HCT116 (cell line): ENCODE measurements at regions of chr6 and their contacts with region 1.

Region 1: GRCh38 chr6:96897383-96898240 is at the start of gene NDUFAF4:
- DNase-seq: peak; percentile 90
- ATAC-seq: peak; percentile 92
- H3K4me3 ChIP-seq: peak within 1 kb of the TSS; percentile 84 to 91
- H3K27ac ChIP-seq: peak within 1 kb of the TSS; percentile 82
- H3K4me1 ChIP-seq: peaks cover 6 to 22% of the 10 kb centered on the region in 2 experiments
- H3K27me3 ChIP-seq: no peaks in the 10 kb centered on the region
- CTCF ChIP-seq: peak; percentile 64 to 85 (median 81); a peak in 5 of 6 replicates
- POLR2A ChIP-seq: peak; percentile 72
- RAD21 ChIP-seq: peak; percentile 62
- total RNA-seq, gene NDUFAF4: 62.4 TPM

Region 2: DNA sequence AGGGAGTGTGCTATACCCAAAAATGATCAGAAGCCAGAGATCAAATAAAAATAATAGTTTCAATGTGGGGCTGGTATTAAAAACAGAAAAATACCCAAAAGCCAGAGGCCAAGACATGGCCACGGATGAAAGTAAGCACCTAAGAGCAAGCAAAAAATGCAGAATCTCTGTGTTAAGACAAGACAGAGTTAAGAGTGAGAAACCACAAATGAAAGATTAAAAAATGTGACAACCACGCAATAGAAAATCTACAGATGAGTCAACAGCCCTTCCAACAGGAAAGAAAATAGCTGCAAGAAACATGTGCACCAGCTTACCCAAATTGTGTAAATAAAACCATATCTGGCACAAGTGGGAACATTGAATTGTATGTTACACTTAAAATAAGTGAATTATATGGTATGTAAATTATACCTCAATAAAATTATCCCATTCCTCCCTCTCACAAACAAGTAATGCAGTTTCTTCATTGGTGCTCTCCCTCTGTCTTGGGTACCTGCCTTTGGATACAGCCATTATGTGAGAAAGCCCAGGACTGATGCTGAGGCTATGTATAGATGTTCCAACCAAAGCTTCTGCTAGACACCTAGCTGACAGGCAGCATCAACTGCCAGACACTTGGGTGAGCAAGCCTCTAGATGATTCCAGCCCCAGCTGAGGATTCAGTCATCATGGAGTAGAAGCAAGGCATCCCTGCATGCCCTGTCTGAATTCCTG is 431.3 kb before region 1 on chr6:
- CTCF ChIA-PET with region 1: no interaction called
- POLR2A ChIA-PET with region 1: no interaction called
- RAD21 ChIA-PET with region 1: no interaction called
- intact Hi-C with region 1: no loop called
- DNase-seq: no peak
- ATAC-seq: no peak
- H3K4me3 ChIP-seq: no peak overlapping the region
- H3K27ac ChIP-seq: no peak overlapping the region
- H3K4me1 ChIP-seq: no peaks in the 10 kb centered on the region
- H3K27me3 ChIP-seq: no peaks in the 10 kb centered on the region
- CTCF ChIP-seq: no peak
- POLR2A ChIP-seq: no peak
- RAD21 ChIP-seq: no peak

Region 3: DNA sequence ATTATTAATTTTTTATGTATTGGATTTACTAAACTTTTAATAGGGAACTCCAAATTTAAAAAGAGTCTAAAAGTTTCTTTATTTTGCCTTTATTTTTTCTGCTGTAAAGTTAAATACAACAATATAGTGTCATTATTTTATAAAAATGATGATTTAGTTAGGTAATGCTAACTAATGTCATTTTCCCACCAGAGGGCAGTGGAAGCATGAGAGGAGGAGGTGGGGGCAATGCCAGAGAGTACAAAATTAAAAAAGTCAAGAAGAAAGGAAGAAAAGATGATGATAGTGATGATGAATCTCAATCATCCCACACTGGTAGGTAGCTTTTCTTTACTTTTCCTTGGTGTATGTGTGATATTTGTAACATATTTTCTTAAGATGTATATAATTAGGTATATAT is 354.9 kb before region 1 on chr6:
- CTCF ChIA-PET with region 1: no interaction called
- POLR2A ChIA-PET with region 1: no interaction called
- RAD21 ChIA-PET with region 1: no interaction called
- intact Hi-C with region 1: loop called (anchors 1 kb)
- DNase-seq: no peak
- ATAC-seq: peak; percentile 58
- H3K4me3 ChIP-seq: no peak overlapping the region
- H3K27ac ChIP-seq: no peak overlapping the region
- H3K4me1 ChIP-seq: no peaks in the 10 kb centered on the region
- H3K27me3 ChIP-seq: no peaks in the 10 kb centered on the region
- CTCF ChIP-seq: peak; percentile 26 to 60 (median 46); a peak in 4 of 6 replicates
- POLR2A ChIP-seq: no peak
- RAD21 ChIP-seq: peak; percentile 49; the same call in 1 of the 2 replicates

Region 4: GRCh38 chr6:96837081-96837971 is 60.3 kb before region 1 on chr6 and contains the start of gene GPR63:
- CTCF ChIA-PET with region 1: no interaction called
- POLR2A ChIA-PET with region 1: no interaction called
- RAD21 ChIA-PET with region 1: no interaction called
- intact Hi-C with region 1: loop called (anchors 1 kb)
- DNase-seq: peak; percentile 69
- ATAC-seq: peak; percentile 95
- H3K4me3 ChIP-seq: peak within 1 kb of the TSS; percentile 80 to 84
- H3K27ac ChIP-seq: peak within 1 kb of the TSS; percentile 81
- H3K4me1 ChIP-seq: peaks cover 6 to 22% of the 10 kb centered on the region in 2 experiments; a peak in 3 of 4 replicates
- H3K27me3 ChIP-seq: no peaks in the 10 kb centered on the region
- CTCF ChIP-seq: no peak
- POLR2A ChIP-seq: peak; percentile 83
- RAD21 ChIP-seq: no peak
- total RNA-seq, gene GPR63: 3.5 TPM

Region 5: DNA sequence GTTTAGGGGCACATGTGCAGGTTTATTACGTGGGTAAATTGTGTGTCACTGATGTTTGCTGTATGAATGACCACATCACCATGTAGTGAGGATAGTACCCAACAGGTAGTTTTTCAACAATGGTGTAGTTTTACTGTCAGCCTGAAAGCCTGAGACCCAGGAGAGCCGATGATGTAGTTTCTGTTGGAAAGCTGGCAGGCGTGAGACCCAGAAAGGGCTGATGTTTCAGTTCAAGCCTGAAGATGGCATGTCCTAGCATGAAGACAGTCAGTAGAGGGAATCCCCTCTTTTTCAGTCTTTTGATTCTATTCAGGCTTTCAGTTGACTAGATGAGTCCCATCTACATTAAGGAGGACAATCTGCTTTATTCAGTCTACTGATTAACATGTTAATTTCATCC is 123.6 kb after region 1 on chr6:
- CTCF ChIA-PET with region 1: no interaction called
- POLR2A ChIA-PET with region 1: no interaction called
- RAD21 ChIA-PET with region 1: no interaction called
- intact Hi-C with region 1: no loop called
- DNase-seq: no peak
- ATAC-seq: no peak
- H3K4me3 ChIP-seq: no peak overlapping the region
- H3K27ac ChIP-seq: no peak overlapping the region
- H3K4me1 ChIP-seq: no peaks in the 10 kb centered on the region
- H3K27me3 ChIP-seq: no peaks in the 10 kb centered on the region
- CTCF ChIP-seq: no peak
- POLR2A ChIP-seq: no peak
- RAD21 ChIP-seq: no peak

Region 6: DNA sequence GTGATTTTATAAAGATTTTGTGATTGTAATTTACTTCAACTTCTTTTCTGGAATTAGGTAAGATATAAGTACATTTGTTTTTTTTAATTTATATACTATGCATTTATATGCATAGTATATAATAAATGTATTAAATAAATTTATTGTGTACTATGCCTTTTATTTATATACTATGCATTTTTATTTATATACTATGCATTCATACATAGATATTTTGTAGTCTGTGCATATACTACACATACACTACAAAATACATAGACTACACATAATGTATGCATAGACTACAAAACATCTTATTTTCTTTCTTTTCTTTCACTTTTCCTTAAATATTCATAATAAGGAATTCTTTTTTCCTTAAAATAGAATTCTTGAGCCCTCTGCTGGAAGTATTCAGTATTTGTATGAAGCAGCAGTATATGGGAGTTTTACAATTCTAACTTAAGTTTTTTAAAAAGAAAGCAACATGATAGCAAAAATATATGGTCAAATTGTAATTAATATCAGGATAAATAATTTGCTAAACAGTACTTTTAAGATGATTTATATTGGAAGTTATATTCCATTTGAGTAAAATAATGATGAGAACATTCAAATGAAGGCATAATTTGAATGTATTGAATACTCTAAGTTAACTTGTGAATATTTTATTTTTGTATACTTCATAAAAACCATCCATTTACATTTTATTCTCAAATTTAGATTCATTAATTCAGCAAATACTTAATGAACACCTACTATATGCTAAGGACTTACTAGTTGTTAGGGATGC is 156.2 kb after region 1 on chr6:
- CTCF ChIA-PET with region 1: interaction called, 85 read pairs
- POLR2A ChIA-PET with region 1: no interaction called
- RAD21 ChIA-PET with region 1: interaction called, 3 to 7 read pairs
- intact Hi-C with region 1: loop called (anchors 1 kb)
- DNase-seq: peak; percentile 21
- ATAC-seq: no peak
- H3K4me3 ChIP-seq: no peak overlapping the region
- H3K27ac ChIP-seq: no peak overlapping the region
- H3K4me1 ChIP-seq: no peaks in the 10 kb centered on the region
- H3K27me3 ChIP-seq: 0 out of 2 replicates have a peak, but pooled peaks cover 4% of the 10 kb centered on the region
- CTCF ChIP-seq: peak; percentile 34 to 77 (median 69); a peak in 4 of 6 replicates
- POLR2A ChIP-seq: no peak
- RAD21 ChIP-seq: peak; percentile 78